ENCODE measurements at regions of chr10 and their contacts with region 1.

Region 1: GRCh38 chr10:27661514-27662286 is 83.9 kb downstream of the MKX start:
- DNase-seq: no peak
- ATAC-seq: no peak
- H3K4me3 ChIP-seq: no peak overlapping the region
- H3K27ac ChIP-seq: no peak overlapping the region
- H3K4me1 ChIP-seq: peaks cover 0 to 3% of the 10 kb centered on the region in 2 donors
- H3K27me3 ChIP-seq: no peaks in the 10 kb centered on the region
- CTCF ChIP-seq: no peak
- POLR2A ChIP-seq: no peak

Region 2: GRCh38 chr10:27446091-27446918 is 215.4 kb before region 1 on chr10:
- in situ Hi-C with region 1: loop called (anchors 10 kb)
- intact Hi-C with region 1: loop called (anchors 2 kb)
- DNase-seq: no peak
- ATAC-seq: no peak
- H3K4me3 ChIP-seq: no peak overlapping the region
- H3K27ac ChIP-seq: no peak overlapping the region
- H3K4me1 ChIP-seq: no peaks in the 10 kb centered on the region
- H3K27me3 ChIP-seq: no peaks in the 10 kb centered on the region
- CTCF ChIP-seq: peak in 4 of 5 experiments; percentile 24 to 47 (median 32)
- POLR2A ChIP-seq: no peak

Region 3: GRCh38 chr10:27558612-27559020 is 103.1 kb before region 1 on chr10:
- in situ Hi-C with region 1: loop called in 3 of 4 experiments (anchors 5 to 10 kb)
- intact Hi-C with region 1: loop called (anchors 5 kb)
- DNase-seq: peak; percentile 10 to 36
- ATAC-seq: peak in 1 of 2 donors; percentile 91
- H3K4me3 ChIP-seq: no peak overlapping the region
- H3K27ac ChIP-seq: no peak overlapping the region
- H3K4me1 ChIP-seq: no peaks in the 10 kb centered on the region
- H3K27me3 ChIP-seq: no peaks in the 10 kb centered on the region
- CTCF ChIP-seq: peak; percentile 16 to 62 (median 49)
- POLR2A ChIP-seq: no peak

Measured in gastrocnemius medialis (tissue), 4 donors.